ENCODE measurements at regions of chr2 and their contacts with region 1.

Region 1: DNA sequence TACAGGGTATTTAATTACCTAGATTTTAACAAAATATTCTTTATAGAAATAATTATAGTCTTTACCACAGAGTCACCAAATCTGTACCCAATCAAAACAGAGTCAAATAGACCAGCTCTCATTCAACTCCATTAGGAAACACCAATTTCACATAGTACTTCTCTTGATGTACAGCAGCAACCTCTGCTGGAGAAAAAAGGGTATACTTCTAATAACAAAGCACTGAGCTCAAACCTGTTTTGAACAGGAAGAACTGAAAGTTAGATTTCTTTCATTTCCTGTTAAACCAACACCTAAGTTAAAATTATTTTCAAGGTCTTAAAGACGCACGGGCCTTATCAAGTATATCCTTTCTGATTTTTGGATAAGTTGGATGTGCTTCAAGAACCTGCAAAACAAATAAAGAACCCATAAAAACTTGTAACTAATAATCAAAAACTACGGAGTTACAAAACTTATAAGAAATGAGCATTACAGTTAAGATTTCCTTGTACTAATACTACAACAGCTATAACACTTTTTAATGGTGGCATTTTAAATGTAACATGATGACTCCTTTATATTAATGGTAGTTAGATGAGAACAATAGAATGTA is 79.0 kb downstream of the TTC21B start:
- ATAC-seq: peak; percentile 45 to 85 (median 72)
- H3K4me3 ChIP-seq: no peak overlapping the region
- H3K27ac ChIP-seq: no peak overlapping the region
- H3K4me1 ChIP-seq: peaks cover 7 to 12% of the 10 kb centered on the region in 2 donors

Region 2: DNA sequence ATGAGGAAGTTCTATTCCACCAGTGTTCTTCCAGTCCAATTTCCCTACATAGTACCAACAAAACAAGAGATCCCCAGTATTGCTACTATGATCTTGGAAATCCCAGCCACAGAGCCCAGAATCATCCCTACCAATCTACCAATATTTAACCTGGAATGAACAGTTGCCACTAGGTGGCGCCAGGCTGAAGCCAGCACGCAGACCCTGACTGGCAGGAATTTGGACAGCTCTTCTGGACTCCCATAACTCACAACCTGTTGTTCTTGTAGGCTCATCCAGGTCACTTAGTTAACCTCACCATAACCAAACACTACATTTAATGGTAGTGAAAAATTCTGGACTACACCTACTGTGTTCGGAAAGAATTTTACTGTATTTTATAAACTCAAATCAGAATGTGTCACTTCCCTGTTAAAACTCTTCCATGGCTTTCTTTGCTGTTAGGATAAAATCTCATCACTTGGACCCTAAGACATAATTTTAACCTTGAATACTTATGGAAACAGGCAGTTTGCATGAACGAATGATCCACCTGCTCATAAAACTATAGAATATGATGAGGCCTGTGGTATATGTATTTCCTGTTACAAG is 859.4 kb before region 1 on chr2:
- in situ Hi-C with region 1: loop called in 1 of 9 experiments (anchors 25 kb)
- ATAC-seq: peak in 7 of 8 experiments; percentile 35 to 79 (median 49)
- H3K4me3 ChIP-seq: no peak overlapping the region
- H3K27ac ChIP-seq: no peak overlapping the region
- H3K4me1 ChIP-seq: peaks cover 10 to 23% of the 10 kb centered on the region in 2 donors

Region 3: DNA sequence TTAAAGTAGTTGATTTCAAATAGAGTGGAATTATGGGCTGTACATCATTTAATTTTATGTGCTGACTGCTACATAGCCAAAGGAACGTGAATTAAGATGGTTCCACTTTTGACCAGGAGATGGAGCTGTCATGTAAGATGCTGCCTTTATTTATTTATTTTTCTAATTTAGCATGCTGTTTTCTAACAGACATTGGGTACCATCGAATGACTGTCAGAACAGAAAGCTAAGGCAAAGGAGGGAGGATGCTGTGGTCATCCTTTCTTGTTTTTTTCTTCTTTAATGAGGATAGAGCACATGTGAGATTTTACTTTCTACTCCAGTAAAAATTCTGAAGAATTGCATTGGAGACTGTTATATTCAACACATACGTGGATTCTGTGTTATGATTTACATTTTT is 635.3 kb before region 1 on chr2 and contains the start of gene SCN2A:
- in situ Hi-C with region 1: loop called in 1 of 9 experiments (anchors 25 kb)
- ATAC-seq: peak; percentile 60 to 76 (median 66)
- H3K4me3 ChIP-seq: peak within 1 kb of the TSS; percentile 18 to 45 (median 32)
- H3K27ac ChIP-seq: no peak within 1 kb of the TSS
- H3K4me1 ChIP-seq: peaks cover 0 to 8% of the 10 kb centered on the region in 2 donors
- total RNA-seq, gene SCN2A: 0.31 to 24.4 (median 7.9) TPM

Region 4: DNA sequence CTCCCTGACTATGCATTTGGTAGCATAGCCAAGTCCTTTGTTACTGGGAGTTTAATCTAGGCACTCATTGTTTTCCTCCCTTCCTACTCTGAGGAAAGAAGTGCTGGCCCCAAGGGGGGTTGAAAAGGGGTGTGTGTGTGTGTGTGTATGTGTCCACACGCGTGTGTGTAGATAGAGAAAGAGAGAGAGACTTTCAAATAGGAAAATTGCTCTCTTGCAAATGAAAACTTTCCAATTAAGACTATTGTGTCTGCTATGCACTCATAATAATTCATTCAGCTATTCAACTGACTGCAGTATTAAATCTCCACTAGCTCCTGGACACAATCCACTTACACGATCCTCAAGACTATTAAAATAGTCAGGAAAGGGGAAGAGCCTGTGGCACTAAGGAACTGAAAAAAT is 498.0 kb before region 1 on chr2:
- in situ Hi-C with region 1: loop called in 1 of 9 experiments (anchors 25 kb)
- ATAC-seq: peak in 5 of 8 experiments; percentile 47 to 62 (median 58)
- H3K4me3 ChIP-seq: no peak overlapping the region
- H3K27ac ChIP-seq: no peak overlapping the region
- H3K4me1 ChIP-seq: peaks cover 2 to 3% of the 10 kb centered on the region in 2 donors

Region 5: DNA sequence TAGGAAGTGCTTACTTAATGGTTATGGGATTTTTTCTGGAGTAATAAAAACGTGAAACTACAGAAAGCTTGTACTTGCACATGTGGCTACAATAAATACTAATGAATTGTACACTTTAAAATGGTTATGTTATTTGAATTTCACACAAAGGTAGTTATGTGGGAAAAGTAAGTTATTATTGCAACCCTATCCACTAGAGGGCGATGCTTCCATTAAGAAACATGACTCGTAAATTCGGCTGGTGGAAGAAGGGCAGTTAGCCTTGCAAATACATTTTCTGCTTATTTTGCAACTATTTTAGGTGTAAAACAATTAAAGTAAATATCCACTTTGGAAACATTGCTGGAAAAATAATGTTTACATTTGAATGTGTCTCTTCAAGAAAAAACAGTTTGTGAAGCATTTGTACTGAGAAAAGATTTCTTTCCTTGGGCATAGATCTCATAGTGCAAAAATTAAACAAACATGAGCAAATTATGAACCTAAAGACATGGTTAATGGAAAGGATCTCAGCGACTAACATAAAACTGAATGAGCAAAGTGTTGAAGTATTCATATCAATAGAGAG is 473.2 kb before region 1 on chr2:
- in situ Hi-C with region 1: loop called in 3 of 9 experiments (anchors 25 kb)
- ATAC-seq: peak in 3 of 8 experiments; percentile 37 to 70 (median 55)
- H3K4me3 ChIP-seq: no peak overlapping the region
- H3K27ac ChIP-seq: no peak overlapping the region
- H3K4me1 ChIP-seq: peaks cover 0 to 3% of the 10 kb centered on the region in 2 donors

Measured in motor neuron (in vitro differentiated cells).